Activated CD4-positive, alpha-beta T cell treated with anti-CD3 and anti-CD28 coated beads, Interleukin-2, amount 10 ng/mL, durations not matched to agents 24 days and 14 days (primary cell): ENCODE measurements at regions of chr9 and their contacts with region 1.

Region 1: GRCh38 chr9:20558566-20559016 is 63.7 kb downstream of the MLLT3 start:
- DNase-seq: peak; percentile 76
- H3K4me3 Mint-ChIP-seq: peak overlapping the region; percentile 24
- H3K27ac Mint-ChIP-seq: peak overlapping the region; percentile 77
- H3K4me1 Mint-ChIP-seq: peaks cover 77% of the 10 kb centered on the region
- H3K27me3 Mint-ChIP-seq: no peaks in the 10 kb centered on the region

Region 2: GRCh38 chr9:20242510-20243189 is 315.9 kb before region 1 on chr9:
- intact Hi-C with region 1: loop called (anchors 10 kb)
- DNase-seq: peak; percentile 88
- H3K4me3 Mint-ChIP-seq: peak overlapping the region; percentile 77
- H3K27ac Mint-ChIP-seq: peak overlapping the region; percentile 61
- H3K4me1 Mint-ChIP-seq: peaks cover 58% of the 10 kb centered on the region
- H3K27me3 Mint-ChIP-seq: no peaks in the 10 kb centered on the region

Region 3: DNA sequence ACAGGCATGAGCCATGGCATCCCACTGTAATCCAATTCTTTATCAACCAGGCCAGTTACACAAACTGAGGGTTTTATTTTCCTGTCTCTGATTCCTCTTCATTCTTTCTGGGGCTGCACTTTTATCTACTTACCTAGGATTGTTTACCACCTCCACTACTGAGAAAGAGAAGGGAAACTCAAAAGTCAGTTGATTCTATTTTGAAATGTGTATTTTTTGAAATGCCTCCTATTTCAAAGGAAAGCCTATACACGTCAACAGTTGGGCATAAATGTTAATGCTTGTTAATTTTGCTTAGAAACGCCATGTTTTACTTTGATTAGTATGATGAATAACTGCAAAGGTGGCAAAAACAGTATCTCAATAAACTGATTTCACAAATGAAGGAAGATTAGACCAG is 28.8 kb before region 1 on chr9:
- intact Hi-C with region 1: loop called (anchors 2 kb)
- DNase-seq: no peak
- H3K4me3 Mint-ChIP-seq: peak overlapping the region; percentile 54
- H3K27ac Mint-ChIP-seq: peak overlapping the region; percentile 64
- H3K4me1 Mint-ChIP-seq: peaks cover 55% of the 10 kb centered on the region
- H3K27me3 Mint-ChIP-seq: no peaks in the 10 kb centered on the region

Region 4: GRCh38 chr9:20570756-20571155 is 12.2 kb after region 1 on chr9:
- intact Hi-C with region 1: loop called (anchors 1 kb)
- DNase-seq: no peak
- H3K4me3 Mint-ChIP-seq: no peak overlapping the region
- H3K27ac Mint-ChIP-seq: peak overlapping the region; percentile 72
- H3K4me1 Mint-ChIP-seq: peaks cover 57% of the 10 kb centered on the region
- H3K27me3 Mint-ChIP-seq: no peaks in the 10 kb centered on the region

Region 5: GRCh38 chr9:20604562-20604961 is 46.0 kb after region 1 on chr9:
- intact Hi-C with region 1: loop called (anchors 1 kb)
- DNase-seq: peak; percentile 71
- H3K4me3 Mint-ChIP-seq: peak overlapping the region; percentile 72
- H3K27ac Mint-ChIP-seq: peak overlapping the region; percentile 79
- H3K4me1 Mint-ChIP-seq: peaks cover 60% of the 10 kb centered on the region
- H3K27me3 Mint-ChIP-seq: no peaks in the 10 kb centered on the region

Region 6: DNA sequence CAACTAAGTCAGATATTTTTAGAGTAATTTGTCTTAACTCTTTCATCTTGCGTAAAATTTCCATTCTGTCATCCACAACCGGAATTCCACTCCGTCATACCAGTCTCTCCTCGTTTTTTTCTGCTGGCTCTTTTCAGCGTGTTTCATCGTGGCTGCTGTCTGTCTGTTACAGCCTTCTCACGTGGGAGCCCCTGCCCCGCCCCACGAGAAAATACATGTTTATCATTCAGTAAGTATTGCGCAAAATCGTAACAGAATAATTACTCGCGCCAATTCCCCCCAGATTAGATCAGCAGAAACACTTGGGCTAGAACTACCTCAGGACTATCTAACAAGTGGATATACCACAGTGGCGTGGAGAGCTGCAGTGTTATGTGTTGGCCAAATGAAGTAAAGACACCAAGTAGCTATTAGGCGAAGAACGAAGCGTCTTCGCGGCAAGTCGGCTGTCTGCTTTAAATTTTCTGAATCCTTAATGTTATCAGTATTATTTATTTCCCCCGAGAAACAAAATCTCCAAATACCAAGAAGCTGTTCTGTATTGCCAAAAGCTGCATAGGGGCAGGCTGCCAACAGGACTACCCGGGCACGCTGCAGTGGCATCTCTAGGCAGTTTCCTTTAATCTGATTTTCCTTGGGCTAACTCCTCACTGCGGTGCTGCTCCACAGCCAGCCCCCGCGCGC is 124.9 kb after region 1 on chr9:
- intact Hi-C with region 1: loop called (anchors 1 kb)
- DNase-seq: peak; percentile 80
- H3K4me3 Mint-ChIP-seq: peak overlapping the region; percentile 90
- H3K27ac Mint-ChIP-seq: peak overlapping the region; percentile 92
- H3K4me1 Mint-ChIP-seq: peaks cover 20% of the 10 kb centered on the region
- H3K27me3 Mint-ChIP-seq: no peaks in the 10 kb centered on the region

Region 7: DNA sequence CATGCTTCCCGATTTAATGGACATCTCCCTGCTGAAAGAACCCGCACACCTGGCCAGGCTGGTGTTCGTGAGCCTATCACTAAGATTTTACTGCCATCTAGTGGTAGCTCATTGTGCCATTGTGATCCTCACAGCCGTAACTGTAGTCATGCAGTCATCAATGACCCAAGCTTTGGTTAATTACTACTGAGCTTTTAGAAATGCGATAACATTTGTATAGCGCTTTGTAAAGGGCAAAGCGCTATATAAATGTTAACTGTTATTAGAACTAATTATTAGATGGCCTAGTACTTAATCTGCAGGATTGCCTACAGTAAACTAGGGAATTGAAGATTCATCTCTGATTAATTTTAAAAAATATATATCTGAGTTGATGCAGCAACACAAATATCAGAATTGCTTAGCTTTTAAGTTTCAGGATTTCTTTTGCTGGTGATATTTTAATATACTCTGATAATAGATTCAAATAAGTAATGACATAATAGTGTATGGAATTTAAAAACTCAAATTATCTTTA is 382.6 kb after region 1 on chr9:
- intact Hi-C with region 1: loop called (anchors 2 kb)
- DNase-seq: peak; percentile 88
- H3K4me3 Mint-ChIP-seq: no peak overlapping the region
- H3K27ac Mint-ChIP-seq: no peak overlapping the region
- H3K4me1 Mint-ChIP-seq: peaks cover 3% of the 10 kb centered on the region
- H3K27me3 Mint-ChIP-seq: no peaks in the 10 kb centered on the region